CD4-positive, alpha-beta T cell (primary cell): ENCODE measurements at regions of chr6 and their contacts with region 1.

Region 1: DNA sequence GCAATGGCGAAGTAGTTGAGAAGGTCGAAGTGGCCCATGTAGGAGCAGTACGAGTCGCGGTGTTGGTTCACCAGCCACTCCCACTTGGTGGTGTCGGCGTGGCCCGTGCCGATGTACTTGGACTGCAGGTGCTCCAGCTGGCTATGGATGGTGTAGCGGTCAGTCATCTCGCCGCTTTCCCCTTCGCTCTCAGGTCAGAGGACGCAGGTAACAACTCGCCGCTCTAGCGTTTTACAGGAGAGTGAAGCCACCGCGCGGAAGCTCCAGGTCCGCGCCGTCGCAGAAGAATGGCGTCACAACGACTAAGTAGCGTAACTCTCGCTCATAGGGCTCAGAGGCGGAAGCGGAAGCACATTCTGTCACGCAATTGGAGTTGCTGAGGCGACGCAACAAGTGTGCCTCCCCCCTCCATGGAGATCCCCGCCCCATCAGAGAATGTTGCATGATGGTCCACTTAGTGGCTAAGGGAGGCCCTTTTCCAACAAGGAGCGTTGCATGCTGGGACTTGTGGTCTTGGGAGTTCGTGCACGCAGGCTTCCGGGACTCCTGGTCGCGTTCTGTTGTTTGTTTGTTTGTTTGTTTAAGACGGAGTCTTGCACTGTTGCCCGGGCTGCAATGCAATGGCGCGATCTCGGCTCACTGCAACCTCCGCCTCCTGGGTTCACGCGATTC is at the start of gene SF3B5:
- DNase-seq: peak; percentile 93 to 100 (median 97)
- ATAC-seq: peak; percentile 96
- H3K4me3 ChIP-seq: peak within 1 kb of the TSS; percentile 83
- H3K4me3 Mint-ChIP-seq: peak within 1 kb of the TSS; percentile 98
- H3K27ac ChIP-seq: peak within 1 kb of the TSS; percentile 84 to 94
- H3K27ac Mint-ChIP-seq: peak within 1 kb of the TSS; percentile 96
- H3K4me1 ChIP-seq: peaks cover 24% of the 10 kb centered on the region
- H3K4me1 Mint-ChIP-seq: peaks cover 30% of the 10 kb centered on the region
- H3K27me3 ChIP-seq: no peaks in the 10 kb centered on the region
- H3K27me3 Mint-ChIP-seq: no peaks in the 10 kb centered on the region
- CTCF ChIP-seq: no peak
- total RNA-seq, gene SF3B5: 113 to 124 TPM

Region 2: GRCh38 chr6:143842902-143843676 is 252.4 kb before region 1 on chr6 and contains the start of gene LTV1:
- CTCF ChIA-PET with region 1: no interaction called
- POLR2A ChIA-PET with region 1: interaction called, 8 read pairs
- intact Hi-C with region 1: loop called in 1 of 2 experiments (anchors 5 kb)
- DNase-seq: peak; percentile 82 to 96 (median 88)
- ATAC-seq: peak; percentile 95
- H3K4me3 ChIP-seq: peak within 1 kb of the TSS; percentile 90
- H3K4me3 Mint-ChIP-seq: peak within 1 kb of the TSS; percentile 98
- H3K27ac ChIP-seq: peak within 1 kb of the TSS; percentile 88 to 95
- H3K27ac Mint-ChIP-seq: peak within 1 kb of the TSS; percentile 98
- H3K4me1 ChIP-seq: peaks cover 23% of the 10 kb centered on the region
- H3K4me1 Mint-ChIP-seq: peaks cover 36% of the 10 kb centered on the region
- H3K27me3 ChIP-seq: no peaks in the 10 kb centered on the region
- H3K27me3 Mint-ChIP-seq: no peaks in the 10 kb centered on the region
- CTCF ChIP-seq: no peak
- total RNA-seq, gene LTV1: 27.0 to 28.5 TPM

Region 3: GRCh38 chr6:144055121-144055931 is 40.1 kb before region 1 on chr6:
- CTCF ChIA-PET with region 1: no interaction called
- POLR2A ChIA-PET with region 1: interaction called, 28 read pairs
- intact Hi-C with region 1: no loop called
- DNase-seq: peak in 12 of 14 experiments; percentile 11 to 86 (median 38)
- ATAC-seq: peak; percentile 98
- H3K4me3 ChIP-seq: peak overlapping the region; percentile 37
- H3K4me3 Mint-ChIP-seq: peak overlapping the region; percentile 87
- H3K27ac ChIP-seq: peak overlapping the region; percentile 40 to 54
- H3K27ac Mint-ChIP-seq: peak overlapping the region; percentile 87
- H3K4me1 ChIP-seq: peaks cover 21% of the 10 kb centered on the region
- H3K4me1 Mint-ChIP-seq: peaks cover 29% of the 10 kb centered on the region
- H3K27me3 ChIP-seq: no peaks in the 10 kb centered on the region
- H3K27me3 Mint-ChIP-seq: no peaks in the 10 kb centered on the region
- CTCF ChIP-seq: no peak

Region 4: DNA sequence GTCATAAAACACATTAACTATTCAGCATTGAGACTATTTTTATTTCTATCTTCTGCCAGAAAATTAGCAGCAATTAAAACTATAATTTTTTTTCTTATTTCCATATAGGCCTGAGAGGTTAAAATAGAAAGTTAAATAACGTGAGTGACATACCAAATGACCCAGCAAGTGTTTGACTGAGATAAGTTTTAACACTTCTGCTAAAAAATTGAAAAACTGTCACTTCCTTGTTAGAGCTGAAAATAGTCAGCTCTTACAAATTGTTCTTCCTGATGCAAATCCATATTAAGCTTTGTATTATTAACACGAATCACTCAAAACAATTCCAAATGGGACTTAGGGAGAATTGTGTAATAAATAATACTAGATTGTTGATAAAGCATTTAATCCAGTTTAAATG is 28.4 kb after region 1 on chr6:
- CTCF ChIA-PET with region 1: no interaction called
- POLR2A ChIA-PET with region 1: no interaction called
- intact Hi-C with region 1: no loop called
- DNase-seq: peak in 1 of 14 experiments; percentile 8
- ATAC-seq: no peak
- H3K4me3 ChIP-seq: no peak overlapping the region
- H3K4me3 Mint-ChIP-seq: no peak overlapping the region
- H3K27ac ChIP-seq: no peak overlapping the region
- H3K27ac Mint-ChIP-seq: no peak overlapping the region
- H3K4me1 ChIP-seq: no peaks in the 10 kb centered on the region
- H3K4me1 Mint-ChIP-seq: no peaks in the 10 kb centered on the region
- H3K27me3 ChIP-seq: no peaks in the 10 kb centered on the region
- H3K27me3 Mint-ChIP-seq: no peaks in the 10 kb centered on the region
- CTCF ChIP-seq: no peak

Region 5: DNA sequence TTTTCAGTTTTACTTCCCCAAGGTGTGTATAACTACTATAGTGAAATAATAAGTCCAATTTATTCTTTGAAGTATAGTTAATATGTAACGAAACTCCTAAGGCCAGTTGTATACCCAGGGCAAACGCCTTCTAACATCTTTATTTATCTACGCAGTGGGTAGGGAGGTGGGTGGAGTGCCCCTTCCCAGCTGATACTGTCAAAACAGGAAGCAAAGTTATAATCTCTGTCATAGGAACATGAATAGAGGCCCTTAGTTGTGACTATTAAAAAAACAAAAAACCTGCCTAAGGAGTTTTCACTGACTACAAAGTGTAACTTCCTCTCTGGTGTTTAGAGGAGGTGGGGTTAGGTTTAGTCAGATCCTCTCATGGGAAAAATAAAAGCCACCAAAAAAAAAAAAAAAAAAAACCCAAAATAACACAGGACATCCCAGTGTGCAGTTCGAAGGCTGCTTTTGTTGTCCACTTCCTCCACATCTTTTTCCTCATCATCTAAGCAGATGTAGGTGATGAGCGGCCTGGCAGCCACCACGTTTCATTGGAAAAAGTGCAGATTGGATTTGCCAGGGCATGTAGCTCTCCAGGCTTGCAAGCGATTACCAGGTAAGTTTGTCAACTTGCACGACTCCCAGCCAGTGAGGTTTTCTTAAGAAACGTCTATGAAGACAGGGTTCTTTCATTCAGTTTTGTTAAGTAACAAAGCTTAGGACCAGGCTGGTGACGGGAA is 248.4 kb after region 1 on chr6:
- CTCF ChIA-PET with region 1: no interaction called
- POLR2A ChIA-PET with region 1: interaction called, 6 read pairs
- intact Hi-C with region 1: loop called (anchors 5 kb)
- DNase-seq: peak in 11 of 14 experiments; percentile 30 to 91 (median 48)
- ATAC-seq: peak; percentile 74
- H3K4me3 ChIP-seq: peak overlapping the region; percentile 72
- H3K4me3 Mint-ChIP-seq: peak overlapping the region; percentile 88
- H3K27ac ChIP-seq: peak overlapping the region; percentile 56 to 75
- H3K27ac Mint-ChIP-seq: peak overlapping the region; percentile 89
- H3K4me1 ChIP-seq: peaks cover 58% of the 10 kb centered on the region
- H3K4me1 Mint-ChIP-seq: peaks cover 73% of the 10 kb centered on the region
- H3K27me3 ChIP-seq: no peaks in the 10 kb centered on the region
- H3K27me3 Mint-ChIP-seq: no peaks in the 10 kb centered on the region
- CTCF ChIP-seq: no peak

Region 6: DNA sequence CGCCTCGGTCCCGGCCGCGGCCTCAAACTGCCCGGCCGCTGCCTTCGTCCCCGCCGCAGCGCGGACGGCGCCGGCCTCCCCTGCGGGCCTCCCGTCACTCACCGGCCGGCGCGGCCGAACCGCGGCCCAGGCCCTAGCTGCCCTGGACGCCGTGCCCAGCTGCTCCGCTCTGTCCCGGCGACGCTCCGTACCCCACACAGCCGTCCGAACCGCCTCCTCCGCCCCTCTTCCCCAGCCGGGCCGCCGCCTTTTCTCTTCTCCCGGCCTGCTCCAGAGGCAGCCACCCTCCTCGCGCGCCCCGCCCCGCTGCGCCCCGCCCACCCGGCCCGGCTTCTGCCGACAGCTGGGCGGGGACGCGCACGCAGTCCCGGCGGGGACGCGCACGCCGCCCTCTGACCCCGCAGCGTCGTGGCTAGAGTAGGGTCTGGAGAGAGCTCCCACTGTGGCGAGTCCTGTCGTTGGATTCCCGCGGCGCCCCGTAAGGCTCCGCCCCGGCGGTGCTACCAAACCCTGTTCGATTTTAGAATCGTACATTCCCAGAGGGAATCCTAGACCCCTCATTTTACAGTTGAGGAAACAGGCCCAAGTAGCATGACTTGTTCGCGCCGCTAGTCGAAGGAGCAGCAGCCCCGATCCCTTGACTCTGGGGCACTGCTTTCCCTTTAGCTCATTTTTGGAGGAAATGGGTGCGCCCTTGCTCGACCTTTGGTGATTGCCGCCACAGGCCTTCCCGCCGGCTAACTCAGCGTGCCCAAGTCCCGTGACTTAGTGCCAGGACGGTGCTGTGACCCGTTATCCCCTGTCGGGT is 1719.2 kb after region 1 on chr6 and contains the start of gene FBXO30:
- CTCF ChIA-PET with region 1: no interaction called
- POLR2A ChIA-PET with region 1: no interaction called
- intact Hi-C with region 1: loop called in 1 of 2 experiments (anchors 10 kb)
- DNase-seq: peak; percentile 72 to 96 (median 83)
- ATAC-seq: peak; percentile 87
- H3K4me3 ChIP-seq: peak within 1 kb of the TSS; percentile 91
- H3K4me3 Mint-ChIP-seq: peak within 1 kb of the TSS; percentile 98
- H3K27ac ChIP-seq: peak within 1 kb of the TSS; percentile 68 to 85
- H3K27ac Mint-ChIP-seq: peak within 1 kb of the TSS; percentile 94
- H3K4me1 ChIP-seq: peaks cover 19% of the 10 kb centered on the region
- H3K4me1 Mint-ChIP-seq: peaks cover 68% of the 10 kb centered on the region
- H3K27me3 ChIP-seq: no peaks in the 10 kb centered on the region
- H3K27me3 Mint-ChIP-seq: no peaks in the 10 kb centered on the region
- CTCF ChIP-seq: no peak
- total RNA-seq, gene FBXO30: 1.3 to 1.4 TPM